ENCODE measurements at regions of chr5 and their contacts with region 1.

Region 1: GRCh38 chr5:141691867-141692532 is 10.0 kb upstream of the ARAP3 start:
- DNase-seq: peak; percentile 88 to 94 (median 93)
- ATAC-seq: peak; percentile 96
- H3K4me3 ChIP-seq: no peak overlapping the region
- H3K4me1 ChIP-seq: peaks cover 9% of the 10 kb centered on the region
- CTCF ChIP-seq: peak; percentile 98

Region 2: GRCh38 chr5:141958113-141958512 is 266.1 kb after region 1 on chr5 and contains the start of gene PCDH12:
- intact Hi-C with region 1: loop called (anchors 5 kb)
- DNase-seq: no peak
- ATAC-seq: no peak
- H3K4me3 ChIP-seq: no peak within 1 kb of the TSS
- H3K4me1 ChIP-seq: peaks cover 10% of the 10 kb centered on the region
- CTCF ChIP-seq: no peak
- total RNA-seq, gene PCDH12: 1.2 to 3.2 (median 2.2) TPM

Measured in mucosa of descending colon (tissue), 3 donors.